IMR-90 (cell line): ENCODE measurements at regions of chr3 and their contacts with region 1.

Region 1: DNA sequence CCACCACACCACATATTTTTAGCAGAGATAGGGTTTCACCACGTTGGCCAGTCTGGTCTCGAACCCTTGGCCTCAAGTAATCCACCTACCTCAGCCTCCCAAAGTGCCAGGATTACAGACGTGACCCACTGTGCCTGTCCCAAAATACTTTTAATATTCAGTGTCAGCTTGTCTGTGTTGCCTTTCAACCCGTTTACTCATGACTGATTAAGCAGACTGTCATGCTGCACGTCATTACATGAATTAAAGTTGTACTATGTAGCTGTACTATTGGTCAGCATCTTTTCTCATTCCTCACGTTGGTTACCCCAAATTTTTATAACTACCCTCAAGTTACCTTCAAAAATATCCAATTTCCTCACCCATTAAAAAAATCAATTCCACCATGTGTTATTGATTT is 48.7 kb upstream of the GADL1 start:
- DNase-seq: no peak
- ATAC-seq: no peak
- H3K4me3 ChIP-seq: no peak overlapping the region
- H3K27ac ChIP-seq: no peak overlapping the region
- H3K4me1 ChIP-seq: no peaks in the 10 kb centered on the region
- H3K27me3 ChIP-seq: no peaks in the 10 kb centered on the region
- CTCF ChIP-seq: no peak
- POLR2A ChIP-seq: no peak
- RAD21 ChIP-seq: no peak

Region 2: DNA sequence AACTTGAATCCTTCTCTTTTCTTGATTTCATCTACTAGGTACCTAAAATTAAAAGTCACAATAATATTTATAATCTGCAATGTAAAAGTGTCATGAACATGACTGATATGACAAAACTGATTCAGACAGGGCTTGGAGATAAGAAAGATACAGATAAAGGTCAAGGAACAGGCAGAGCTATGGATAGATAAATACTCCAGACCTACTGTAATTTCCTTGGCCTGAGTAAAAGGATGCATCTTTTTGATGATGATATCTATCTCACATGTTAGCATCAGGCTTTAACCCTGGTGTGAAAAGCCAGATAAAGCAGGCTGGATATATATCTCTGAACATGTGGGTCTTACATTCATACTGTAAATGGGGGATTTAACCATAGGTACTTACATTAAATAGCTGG is 156.8 kb before region 1 on chr3:
- CTCF ChIA-PET with region 1: no interaction called
- POLR2A ChIA-PET with region 1: no interaction called
- dilution Hi-C with region 1: no loop called
- in situ Hi-C with region 1: no loop called
- intact Hi-C with region 1: loop called (anchors 5 kb)
- DNase-seq: no peak
- ATAC-seq: no peak
- H3K4me3 ChIP-seq: no peak overlapping the region
- H3K27ac ChIP-seq: no peak overlapping the region
- H3K4me1 ChIP-seq: no peaks in the 10 kb centered on the region
- H3K27me3 ChIP-seq: peaks cover 7% of the 10 kb centered on the region; the same call in 1 of the 2 replicates
- CTCF ChIP-seq: no peak
- POLR2A ChIP-seq: no peak
- RAD21 ChIP-seq: no peak